GM13977 (cell line): ENCODE measurements at regions of chr6 and their contacts with region 1.

Region 1: GRCh38 chr6:71012866-71013469 is 56.1 kb upstream of the B3GAT2 start:
- DNase-seq: peak; percentile 50
- CTCF ChIP-seq: peak; percentile 80

Region 2: DNA sequence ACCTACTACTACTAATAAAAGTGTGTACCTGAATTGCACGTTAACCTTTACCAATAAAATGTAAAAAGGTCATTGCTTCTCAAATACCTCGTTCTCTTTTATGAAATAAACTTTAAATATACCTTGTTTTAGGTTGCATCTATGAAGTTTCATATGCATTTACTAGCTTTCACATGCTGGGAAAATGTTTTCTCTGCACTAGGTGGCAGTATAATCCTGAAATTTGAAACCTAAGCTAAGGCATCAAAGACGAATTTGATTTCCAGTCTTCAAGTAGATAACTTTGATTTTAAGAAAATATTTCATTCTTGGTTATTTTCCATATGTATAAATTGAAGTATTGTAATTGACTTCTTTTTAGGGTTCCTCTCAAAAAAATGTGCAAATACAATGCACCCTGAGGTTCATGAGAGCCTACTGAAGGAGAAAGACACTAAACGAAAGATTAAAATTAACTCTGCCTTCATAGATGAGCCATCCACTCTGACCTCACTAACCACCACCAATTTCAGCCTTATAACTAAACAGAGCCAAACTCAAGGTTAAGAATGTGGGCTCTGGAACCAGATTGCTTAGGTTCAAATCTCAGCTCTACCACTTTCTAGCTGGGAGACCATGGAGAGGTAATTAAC is 702.8 kb before region 1 on chr6:
- in situ Hi-C with region 1: loop called (anchors 25 kb)
- DNase-seq: no peak
- CTCF ChIP-seq: peak; percentile 62